CD4-positive, alpha-beta memory T cell (primary cell): ENCODE measurements at regions of chr2 and their contacts with region 1.

Region 1: GRCh38 chr2:73176881-73177644 is 25.3 kb upstream of the NOTO start:
- DNase-seq: peak; percentile 82 to 87 (median 85)
- H3K4me3 ChIP-seq: peak overlapping the region; percentile 53 to 65
- H3K4me3 Mint-ChIP-seq: peak overlapping the region; percentile 80 to 92 (median 90)
- H3K27ac ChIP-seq: no peak overlapping the region
- H3K27ac Mint-ChIP-seq: peak overlapping the region in 5 of 7 donors; percentile 36 to 90 (median 60)
- H3K4me1 ChIP-seq: peaks cover 23% of the 10 kb centered on the region
- H3K4me1 Mint-ChIP-seq: peaks cover 11 to 21% (median 15%) of the 10 kb centered on the region in 4 donors
- H3K27me3 ChIP-seq: peaks cover 17% of the 10 kb centered on the region
- H3K27me3 Mint-ChIP-seq: peaks cover 10 to 31% of the 10 kb centered on the region in 2 donors

Region 2: DNA sequence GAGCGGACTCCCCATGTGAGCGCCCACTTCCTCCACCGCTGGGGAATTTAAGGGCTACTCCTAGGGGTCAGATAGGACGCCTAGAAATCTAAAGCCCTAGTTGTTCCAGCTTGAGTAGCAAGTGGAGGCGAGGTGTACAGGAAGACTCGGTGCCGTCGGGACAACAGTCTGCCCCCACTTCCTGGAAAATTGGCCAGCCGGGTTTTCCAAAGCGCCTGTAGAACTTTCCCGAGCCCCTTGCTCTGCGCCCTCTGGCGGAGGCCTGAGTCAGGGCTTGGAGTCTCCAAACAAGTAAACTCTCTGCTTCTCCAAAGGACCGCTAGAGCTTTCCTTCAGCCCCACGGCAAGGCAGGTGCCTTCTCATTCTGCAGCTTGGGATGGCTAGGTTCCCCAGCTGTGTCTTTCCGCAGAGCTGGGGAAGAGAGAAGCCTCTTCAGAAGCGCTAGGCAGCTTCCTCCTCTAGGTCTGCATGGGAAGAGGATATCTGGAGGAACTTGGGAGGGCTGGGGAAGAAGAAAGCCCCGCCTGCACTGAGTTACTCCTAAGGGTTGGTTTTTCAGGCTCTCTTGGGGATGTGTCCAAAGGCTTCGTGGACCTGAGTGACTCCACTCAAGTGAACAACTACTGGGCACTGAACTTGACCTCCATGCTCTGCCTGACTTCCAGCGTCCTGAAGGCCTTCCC is 289.2 kb before region 1 on chr2:
- CTCF ChIA-PET with region 1: interaction called, 24 read pairs
- POLR2A ChIA-PET with region 1: no interaction called
- intact Hi-C with region 1: loop called (anchors 1 kb)
- DNase-seq: peak in 4 of 5 donors; percentile 13 to 38 (median 32)
- H3K4me3 ChIP-seq: peak overlapping the region; percentile 36 to 51
- H3K4me3 Mint-ChIP-seq: peak overlapping the region; percentile 67 to 85 (median 80)
- H3K27ac ChIP-seq: no peak overlapping the region
- H3K27ac Mint-ChIP-seq: no peak overlapping the region
- H3K4me1 ChIP-seq: peaks cover 7% of the 10 kb centered on the region
- H3K4me1 Mint-ChIP-seq: peaks cover 3 to 10% (median 6%) of the 10 kb centered on the region in 4 donors
- H3K27me3 ChIP-seq: peaks cover 30% of the 10 kb centered on the region
- H3K27me3 Mint-ChIP-seq: peaks cover 33 to 54% of the 10 kb centered on the region in 2 donors

Region 3: GRCh38 chr2:73080711-73081131 is 96.3 kb before region 1 on chr2:
- CTCF ChIA-PET with region 1: interaction called, 143 read pairs
- POLR2A ChIA-PET with region 1: interaction called, 3 read pairs
- intact Hi-C with region 1: loop called (anchors 1 kb)
- DNase-seq: no peak
- H3K4me3 ChIP-seq: no peak overlapping the region
- H3K4me3 Mint-ChIP-seq: no peak overlapping the region
- H3K27ac ChIP-seq: no peak overlapping the region
- H3K27ac Mint-ChIP-seq: no peak overlapping the region
- H3K4me1 ChIP-seq: no peaks in the 10 kb centered on the region
- H3K4me1 Mint-ChIP-seq: peaks cover 0 to 9% (median 1%) of the 10 kb centered on the region in 4 donors
- H3K27me3 ChIP-seq: no peaks in the 10 kb centered on the region
- H3K27me3 Mint-ChIP-seq: no peaks in the 10 kb centered on the region

Region 4: DNA sequence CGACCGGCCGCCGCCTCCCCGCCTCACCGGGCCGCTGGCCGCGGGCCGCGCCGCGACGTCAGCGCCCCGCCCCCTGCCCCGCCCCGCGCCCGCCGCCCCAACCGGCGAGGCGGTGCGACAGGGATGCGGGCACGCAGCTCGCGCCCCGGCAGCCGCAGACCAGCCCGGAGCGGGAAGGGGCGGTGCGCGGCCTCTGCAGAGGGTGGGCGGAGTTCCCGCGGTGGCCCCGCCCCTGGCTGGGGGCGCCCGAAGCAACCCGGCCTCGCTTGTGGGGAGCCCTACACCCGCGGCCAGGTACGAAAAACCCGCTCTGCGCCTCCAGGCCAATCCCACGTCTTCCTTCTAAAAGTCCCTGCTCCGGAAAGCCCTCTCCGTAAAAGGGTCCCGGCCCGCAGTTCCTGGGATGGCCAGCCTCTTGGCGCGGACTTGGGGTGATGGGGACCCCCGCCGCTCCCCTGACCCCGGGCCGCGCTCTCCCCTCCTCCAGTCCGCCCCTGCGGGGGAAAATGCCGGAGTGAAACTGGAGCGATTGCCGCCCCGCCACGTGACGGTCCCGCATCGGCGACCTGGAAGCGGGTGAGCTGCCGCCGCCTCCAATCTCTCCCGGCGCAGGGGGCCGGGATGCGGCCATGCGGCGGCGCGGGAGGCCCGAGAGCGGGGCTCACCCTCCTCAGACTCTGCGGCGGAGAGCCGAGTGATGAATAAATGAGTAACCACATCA is 64.0 kb before region 1 on chr2 and contains the start of gene RAB11FIP5:
- CTCF ChIA-PET with region 1: interaction called, 13 read pairs
- POLR2A ChIA-PET with region 1: interaction called, 8 read pairs
- intact Hi-C with region 1: loop called (anchors 1 kb)
- DNase-seq: peak; percentile 76 to 83 (median 82)
- H3K4me3 ChIP-seq: peak within 1 kb of the TSS in 1 of 2 donors; percentile 65
- H3K4me3 Mint-ChIP-seq: peak within 1 kb of the TSS; percentile 84 to 91 (median 89)
- H3K27ac ChIP-seq: peak within 1 kb of the TSS; percentile 60
- H3K27ac Mint-ChIP-seq: peak within 1 kb of the TSS; percentile 29 to 90 (median 85)
- H3K4me1 ChIP-seq: peaks cover 31% of the 10 kb centered on the region
- H3K4me1 Mint-ChIP-seq: peaks cover 17 to 40% (median 27%) of the 10 kb centered on the region in 4 donors
- H3K27me3 ChIP-seq: no peaks in the 10 kb centered on the region
- H3K27me3 Mint-ChIP-seq: no peaks in the 10 kb centered on the region
- total RNA-seq, gene RAB11FIP5: 10.9 to 12.8 TPM

Region 5: GRCh38 chr2:73212448-73213176 is 35.5 kb after region 1 on chr2:
- CTCF ChIA-PET with region 1: interaction called, 63 read pairs
- POLR2A ChIA-PET with region 1: no interaction called
- intact Hi-C with region 1: loop called (anchors 1 kb)
- DNase-seq: peak; percentile 58 to 70 (median 65)
- H3K4me3 ChIP-seq: no peak overlapping the region
- H3K4me3 Mint-ChIP-seq: peak overlapping the region; percentile 45 to 83 (median 58)
- H3K27ac ChIP-seq: no peak overlapping the region
- H3K27ac Mint-ChIP-seq: peak overlapping the region in 5 of 7 donors; percentile 23 to 97 (median 76)
- H3K4me1 ChIP-seq: peaks cover 33% of the 10 kb centered on the region
- H3K4me1 Mint-ChIP-seq: peaks cover 25 to 38% (median 31%) of the 10 kb centered on the region in 4 donors
- H3K27me3 ChIP-seq: no peaks in the 10 kb centered on the region
- H3K27me3 Mint-ChIP-seq: peaks cover 8 to 9% of the 10 kb centered on the region in 2 donors

Region 6: GRCh38 chr2:73385595-73386341 is 208.7 kb after region 1 on chr2 and contains the start of gene ALMS1:
- CTCF ChIA-PET with region 1: no interaction called
- POLR2A ChIA-PET with region 1: no interaction called
- intact Hi-C with region 1: no loop called
- DNase-seq: peak; percentile 86 to 91 (median 91)
- H3K4me3 ChIP-seq: peak within 1 kb of the TSS; percentile 62 to 79
- H3K4me3 Mint-ChIP-seq: peak within 1 kb of the TSS; percentile 91 to 93 (median 92)
- H3K27ac ChIP-seq: peak within 1 kb of the TSS; percentile 77
- H3K27ac Mint-ChIP-seq: peak within 1 kb of the TSS; percentile 96 to 99 (median 98)
- H3K4me1 ChIP-seq: peaks cover 25% of the 10 kb centered on the region
- H3K4me1 Mint-ChIP-seq: peaks cover 28 to 43% (median 34%) of the 10 kb centered on the region in 4 donors
- H3K27me3 ChIP-seq: no peaks in the 10 kb centered on the region
- H3K27me3 Mint-ChIP-seq: peaks cover 0 to 3% of the 10 kb centered on the region in 2 donors
- total RNA-seq, gene ALMS1: 35.5 to 42.9 TPM